Activated B cell treated with CpG ODN at 0.5 μM for 24 hours (primary cell): ENCODE measurements at regions of chr19 and their contacts with region 1.

Region 1: GRCh38 chr19:39970675-39971379 is at the start of gene PSMC4:
- DNase-seq: peak; percentile 98
- ATAC-seq: peak; percentile 96
- H3K4me3 Mint-ChIP-seq: peak within 1 kb of the TSS; percentile 98
- H3K27ac Mint-ChIP-seq: peak within 1 kb of the TSS; percentile 98
- H3K4me1 Mint-ChIP-seq: peaks cover 39% of the 10 kb centered on the region
- H3K27me3 Mint-ChIP-seq: no peaks in the 10 kb centered on the region
- CTCF ChIP-seq: peak; percentile 21
- total RNA-seq, gene PSMC4: 109 and 115 TPM in 2 replicates

Region 2: GRCh38 chr19:39792999-39793546 is 177.8 kb before region 1 on chr19:
- CTCF ChIA-PET with region 1: interaction called, 21 read pairs
- POLR2A ChIA-PET with region 1: interaction called, 8 read pairs
- intact Hi-C with region 1: loop called (anchors 1 kb)
- DNase-seq: peak; percentile 67
- ATAC-seq: peak; percentile 97
- H3K4me3 Mint-ChIP-seq: peak overlapping the region; percentile 78
- H3K27ac Mint-ChIP-seq: no peak overlapping the region
- H3K4me1 Mint-ChIP-seq: peaks cover 7% of the 10 kb centered on the region
- H3K27me3 Mint-ChIP-seq: peaks cover 3% of the 10 kb centered on the region
- CTCF ChIP-seq: peak; percentile 49

Region 3: GRCh38 chr19:39846176-39846677 is 124.6 kb before region 1 on chr19 and contains the start of gene FBL:
- CTCF ChIA-PET with region 1: interaction called, 12 read pairs
- POLR2A ChIA-PET with region 1: interaction called, 28 read pairs
- intact Hi-C with region 1: loop called (anchors 1 kb)
- DNase-seq: peak; percentile 98
- ATAC-seq: peak; percentile 94
- H3K4me3 Mint-ChIP-seq: peak within 1 kb of the TSS; percentile 93
- H3K27ac Mint-ChIP-seq: peak within 1 kb of the TSS; percentile 93
- H3K4me1 Mint-ChIP-seq: peaks cover 45% of the 10 kb centered on the region
- H3K27me3 Mint-ChIP-seq: no peaks in the 10 kb centered on the region
- CTCF ChIP-seq: no peak
- total RNA-seq, gene FBL: 420 and 482 TPM in 2 replicates

Region 4: GRCh38 chr19:39906820-39907611 is 63.8 kb before region 1 on chr19:
- CTCF ChIA-PET with region 1: interaction called, 20 read pairs
- POLR2A ChIA-PET with region 1: interaction called, 4 read pairs
- intact Hi-C with region 1: no loop called
- DNase-seq: no peak
- ATAC-seq: no peak
- H3K4me3 Mint-ChIP-seq: no peak overlapping the region
- H3K27ac Mint-ChIP-seq: no peak overlapping the region
- H3K4me1 Mint-ChIP-seq: peaks cover 5% of the 10 kb centered on the region
- H3K27me3 Mint-ChIP-seq: no peaks in the 10 kb centered on the region
- CTCF ChIP-seq: no peak

Region 5: GRCh38 chr19:39951686-39952085 is 19.1 kb before region 1 on chr19:
- CTCF ChIA-PET with region 1: interaction called, 39 read pairs
- POLR2A ChIA-PET with region 1: interaction called, 63 read pairs
- intact Hi-C with region 1: no loop called
- DNase-seq: no peak
- ATAC-seq: no peak
- H3K4me3 Mint-ChIP-seq: peak overlapping the region; percentile 66
- H3K27ac Mint-ChIP-seq: peak overlapping the region; percentile 93
- H3K4me1 Mint-ChIP-seq: peaks cover 81% of the 10 kb centered on the region
- H3K27me3 Mint-ChIP-seq: no peaks in the 10 kb centered on the region
- CTCF ChIP-seq: no peak

Region 6: DNA sequence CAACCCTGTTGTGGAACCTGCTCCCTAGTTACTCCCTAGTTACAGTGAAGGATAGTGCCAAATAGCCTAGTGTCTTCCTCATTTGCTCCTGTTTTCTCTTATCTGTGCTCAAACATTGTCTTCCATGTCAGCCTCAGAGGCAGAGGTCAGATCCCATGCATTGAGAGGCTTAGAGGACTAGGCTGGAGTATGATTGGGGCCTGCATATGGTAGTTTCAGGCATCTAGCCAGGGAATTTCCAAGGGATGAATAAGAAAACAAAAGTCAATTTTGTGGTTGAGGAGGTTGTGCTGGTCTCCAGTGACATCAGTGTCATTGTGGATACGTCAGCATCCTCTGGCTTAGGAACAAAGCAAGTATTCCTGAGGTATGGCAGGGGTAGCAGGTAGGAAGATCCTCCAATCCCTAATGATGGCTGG is 35.5 kb after region 1 on chr19:
- CTCF ChIA-PET with region 1: no interaction called
- POLR2A ChIA-PET with region 1: no interaction called
- intact Hi-C with region 1: no loop called
- DNase-seq: no peak
- ATAC-seq: no peak
- H3K4me3 Mint-ChIP-seq: no peak overlapping the region
- H3K27ac Mint-ChIP-seq: no peak overlapping the region
- H3K4me1 Mint-ChIP-seq: no peaks in the 10 kb centered on the region
- H3K27me3 Mint-ChIP-seq: no peaks in the 10 kb centered on the region
- CTCF ChIP-seq: no peak

Region 7: DNA sequence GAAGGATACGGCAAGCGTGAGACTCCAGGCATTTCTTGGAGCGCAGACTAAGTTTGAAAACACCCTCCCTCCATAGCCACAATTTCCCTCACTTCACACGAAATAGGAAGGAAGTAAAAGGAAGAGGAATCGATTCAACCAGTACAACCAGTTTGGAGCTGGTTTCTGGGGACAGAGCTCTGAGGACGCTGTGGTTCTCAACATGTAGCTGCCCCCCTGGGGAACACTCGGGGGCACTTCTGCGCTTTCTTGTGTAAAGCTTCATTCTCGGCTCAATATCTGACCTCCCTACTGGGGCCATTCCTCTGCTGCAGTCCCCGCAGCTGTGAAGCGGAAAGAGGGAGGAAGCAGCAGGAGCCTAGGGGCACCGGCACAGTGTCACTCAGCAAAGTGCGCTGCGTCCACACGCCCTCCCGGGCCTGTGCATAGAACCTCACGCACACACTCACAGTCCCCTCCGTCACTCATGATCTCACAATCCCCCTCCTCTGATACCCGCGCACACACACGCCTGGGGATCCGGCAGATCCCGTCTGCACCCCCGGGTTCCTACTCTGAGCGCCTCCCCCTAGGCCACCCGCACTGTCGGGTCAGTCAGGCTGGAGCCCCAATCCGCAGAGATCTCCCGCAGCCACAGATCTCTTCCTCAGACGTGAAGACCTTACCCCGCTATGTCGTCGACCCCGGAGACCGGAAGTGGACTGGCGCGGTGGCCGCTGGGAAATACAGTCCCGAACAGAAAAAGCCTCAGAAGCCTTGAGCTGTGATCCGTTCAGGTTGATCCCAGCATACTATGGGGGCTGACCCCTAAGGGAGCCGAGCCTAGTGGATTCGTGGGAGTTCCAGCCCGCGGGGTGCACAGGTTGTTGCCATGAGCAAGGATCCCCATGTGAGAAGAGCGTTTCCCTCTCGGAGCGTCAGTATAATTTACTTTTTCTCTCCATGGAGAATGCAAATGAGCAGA is 119.7 kb after region 1 on chr19 and contains the start of gene ZNF780A:
- CTCF ChIA-PET with region 1: interaction called, 3 read pairs
- POLR2A ChIA-PET with region 1: interaction called, 13 read pairs
- intact Hi-C with region 1: no loop called
- DNase-seq: peak; percentile 71
- ATAC-seq: peak; percentile 84
- H3K4me3 Mint-ChIP-seq: peak within 1 kb of the TSS; percentile 100
- H3K27ac Mint-ChIP-seq: peak within 1 kb of the TSS; percentile 100
- H3K4me1 Mint-ChIP-seq: peaks cover 35% of the 10 kb centered on the region
- H3K27me3 Mint-ChIP-seq: peaks cover 12% of the 10 kb centered on the region
- CTCF ChIP-seq: no peak
- total RNA-seq, gene ZNF780A: 23.8 and 25.5 TPM in 2 replicates